MCF 10A (cell line): ENCODE measurements at regions of chr9 and their contacts with region 1.

Region 1: DNA sequence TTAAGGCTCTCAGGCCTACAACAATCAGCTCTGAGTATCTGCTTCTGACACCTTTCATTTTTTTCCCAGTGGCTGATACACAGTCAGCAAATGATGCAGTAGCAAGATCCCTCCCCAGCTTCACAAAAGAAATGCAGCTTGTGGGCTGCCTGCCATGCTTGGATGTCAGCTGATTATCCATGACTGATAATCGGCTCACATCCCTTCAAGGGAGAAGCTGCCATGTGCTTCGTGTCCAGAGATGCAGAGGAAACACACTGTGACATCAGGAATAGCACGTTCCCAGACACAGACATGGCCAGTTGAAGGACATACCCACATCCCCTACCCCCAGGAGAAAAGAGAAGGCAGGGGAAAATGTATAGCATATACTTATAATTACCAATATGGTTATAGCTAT is 27.9 kb downstream of the TMEM215 start:
- DNase-seq: no peak
- H3K4me3 Mint-ChIP-seq: no peak overlapping the region
- H3K27ac Mint-ChIP-seq: no peak overlapping the region
- H3K4me1 Mint-ChIP-seq: no peaks in the 10 kb centered on the region
- H3K27me3 Mint-ChIP-seq: peaks cover 11% of the 10 kb centered on the region
- CTCF ChIP-seq: no peak

Region 2: GRCh38 chr9:32764140-32764539 is 47.1 kb before region 1 on chr9:
- CTCF ChIA-PET with region 1: no interaction called
- POLR2A ChIA-PET with region 1: no interaction called
- intact Hi-C with region 1: no loop called
- DNase-seq: no peak
- H3K4me3 Mint-ChIP-seq: no peak overlapping the region
- H3K27ac Mint-ChIP-seq: no peak overlapping the region
- H3K4me1 Mint-ChIP-seq: no peaks in the 10 kb centered on the region
- H3K27me3 Mint-ChIP-seq: no peaks in the 10 kb centered on the region
- CTCF ChIP-seq: no peak

Region 3: DNA sequence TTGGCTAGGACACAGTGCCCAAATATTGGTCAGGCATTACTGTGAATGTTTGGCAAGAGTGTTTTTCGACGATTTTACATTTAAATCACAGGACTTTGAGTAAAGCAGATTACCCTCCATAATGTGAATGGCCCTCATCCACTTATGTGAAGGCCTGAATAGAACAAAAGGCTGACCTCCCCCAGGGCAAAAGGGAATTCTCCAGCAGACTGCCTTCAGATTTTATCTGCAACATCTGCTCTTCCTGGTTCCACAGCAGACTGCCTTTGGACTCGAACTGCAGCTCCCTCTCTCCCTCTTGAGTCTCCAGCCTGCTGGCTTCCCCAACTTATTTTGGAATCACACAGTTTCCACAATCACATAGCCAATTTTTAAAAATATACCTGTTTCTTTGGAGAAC is 35.0 kb before region 1 on chr9:
- CTCF ChIA-PET with region 1: no interaction called
- POLR2A ChIA-PET with region 1: no interaction called
- intact Hi-C with region 1: loop called (anchors 2 kb)
- DNase-seq: no peak
- H3K4me3 Mint-ChIP-seq: no peak overlapping the region
- H3K27ac Mint-ChIP-seq: no peak overlapping the region
- H3K4me1 Mint-ChIP-seq: no peaks in the 10 kb centered on the region
- H3K27me3 Mint-ChIP-seq: peaks cover 48% of the 10 kb centered on the region
- CTCF ChIP-seq: no peak